ENCODE measurements at regions of chr11 and their contacts with region 1.

Region 1: DNA sequence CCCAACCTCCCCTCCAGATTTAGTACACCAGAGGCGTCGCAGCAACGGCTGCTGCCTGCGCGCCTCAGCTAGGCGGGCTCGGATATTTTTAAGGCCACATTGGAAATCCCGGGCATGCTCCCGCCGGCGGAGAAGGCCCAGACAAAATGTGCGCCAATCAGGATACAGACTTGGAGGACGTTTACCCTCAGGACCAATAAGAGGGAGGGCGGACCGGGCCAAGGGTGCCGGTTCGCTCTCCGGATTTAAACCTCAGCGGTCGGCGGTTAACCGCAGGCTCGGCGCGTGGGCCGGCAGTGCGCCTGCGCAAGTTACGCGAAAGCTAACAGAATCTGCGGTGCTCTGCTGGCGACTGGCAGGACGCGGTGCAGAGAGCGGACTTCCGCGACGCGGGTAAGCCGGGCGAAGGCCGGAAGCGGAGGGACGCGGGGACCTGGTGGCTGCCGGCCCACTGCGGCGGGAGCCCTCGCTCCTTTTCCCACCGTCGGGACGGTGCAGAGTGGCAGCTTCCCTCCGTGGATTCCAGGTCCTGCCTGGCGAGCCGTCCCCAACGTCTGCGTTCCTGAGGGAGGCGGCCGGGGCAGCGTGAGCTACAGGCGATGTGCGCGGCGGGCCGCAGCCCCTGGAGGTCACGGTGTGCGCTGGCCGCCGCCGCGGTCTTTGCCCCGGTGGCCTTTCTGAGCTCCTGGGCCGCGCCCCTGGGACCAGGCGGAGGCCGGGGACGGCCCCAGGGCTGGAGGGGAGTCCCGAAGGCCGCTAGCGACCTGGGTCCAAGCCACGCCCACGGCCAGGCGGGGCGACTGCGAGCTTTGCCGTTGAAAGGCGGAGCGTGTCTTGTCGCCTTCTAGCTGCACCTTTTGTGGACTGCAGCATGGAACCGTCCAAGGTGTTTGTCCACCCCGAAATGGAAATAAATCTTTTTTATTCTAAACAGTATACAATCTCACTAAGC is at the start of gene HYLS1:
- DNase-seq: peak; percentile 97
- ATAC-seq: peak; percentile 84
- H3K4me3 Mint-ChIP-seq: peak within 1 kb of the TSS; percentile 90
- H3K27ac Mint-ChIP-seq: peak within 1 kb of the TSS; percentile 98
- H3K4me1 Mint-ChIP-seq: peaks cover 18% of the 10 kb centered on the region
- H3K27me3 Mint-ChIP-seq: peaks cover 3% of the 10 kb centered on the region
- CTCF ChIP-seq: no peak
- total RNA-seq, gene HYLS1: 9.0 TPM in 2 replicates

Region 2: GRCh38 chr11:124758317-124759203 is 1129.1 kb before region 1 on chr11:
- CTCF ChIA-PET with region 1: no interaction called
- POLR2A ChIA-PET with region 1: no interaction called
- intact Hi-C with region 1: loop called (anchors 5 kb)
- DNase-seq: peak; percentile 72
- ATAC-seq: peak; percentile 67
- H3K4me3 Mint-ChIP-seq: peak overlapping the region; percentile 79
- H3K27ac Mint-ChIP-seq: peak overlapping the region; percentile 60
- H3K4me1 Mint-ChIP-seq: peaks cover 46% of the 10 kb centered on the region
- H3K27me3 Mint-ChIP-seq: peaks cover 2% of the 10 kb centered on the region
- CTCF ChIP-seq: no peak

Region 3: DNA sequence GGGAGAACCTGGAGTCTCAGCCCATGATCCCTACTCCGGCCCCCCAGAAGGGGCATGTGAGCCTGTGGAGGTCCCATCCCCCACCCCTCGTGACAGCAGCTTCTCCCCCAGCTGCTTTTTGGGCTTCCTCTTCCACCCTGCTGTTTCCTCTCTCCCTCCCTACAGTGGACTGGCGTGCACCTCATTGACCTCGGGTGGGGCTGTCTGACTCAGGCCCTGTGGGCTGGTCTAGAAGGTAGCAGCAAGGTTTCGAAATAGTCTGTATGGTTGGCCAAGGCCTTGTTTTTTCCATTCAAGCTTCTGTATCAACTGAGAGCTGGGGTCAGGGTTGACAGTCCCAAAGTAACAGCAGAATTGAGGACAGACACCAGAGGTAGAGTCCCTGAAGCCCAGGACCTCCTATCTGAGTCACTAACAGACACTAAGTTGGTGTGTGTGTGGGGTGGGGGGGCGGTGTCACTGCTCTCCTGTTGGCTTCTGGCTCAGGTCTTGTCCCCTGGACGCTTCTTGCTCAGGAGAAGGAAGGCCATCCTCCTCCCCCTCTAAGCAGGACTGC is 816.9 kb before region 1 on chr11:
- CTCF ChIA-PET with region 1: interaction called, 3 read pairs
- POLR2A ChIA-PET with region 1: no interaction called
- intact Hi-C with region 1: loop called (anchors 5 kb)
- DNase-seq: no peak
- ATAC-seq: peak; percentile 69
- H3K4me3 Mint-ChIP-seq: peak overlapping the region; percentile 40
- H3K27ac Mint-ChIP-seq: peak overlapping the region; percentile 82
- H3K4me1 Mint-ChIP-seq: peaks cover 71% of the 10 kb centered on the region
- H3K27me3 Mint-ChIP-seq: peaks cover 2% of the 10 kb centered on the region
- CTCF ChIP-seq: no peak

Region 4: GRCh38 chr11:125568970-125569914 is 318.4 kb before region 1 on chr11 and contains the start of gene EI24:
- CTCF ChIA-PET with region 1: interaction called, 3 read pairs
- POLR2A ChIA-PET with region 1: interaction called, 9 read pairs
- intact Hi-C with region 1: loop called (anchors 1 kb)
- DNase-seq: peak; percentile 83
- ATAC-seq: peak; percentile 97
- H3K4me3 Mint-ChIP-seq: peak within 1 kb of the TSS; percentile 93
- H3K27ac Mint-ChIP-seq: peak within 1 kb of the TSS; percentile 88
- H3K4me1 Mint-ChIP-seq: peaks cover 22% of the 10 kb centered on the region
- H3K27me3 Mint-ChIP-seq: no peaks in the 10 kb centered on the region
- CTCF ChIP-seq: no peak
- total RNA-seq, gene EI24: 34.3 and 34.5 TPM in 2 replicates

Region 5: DNA sequence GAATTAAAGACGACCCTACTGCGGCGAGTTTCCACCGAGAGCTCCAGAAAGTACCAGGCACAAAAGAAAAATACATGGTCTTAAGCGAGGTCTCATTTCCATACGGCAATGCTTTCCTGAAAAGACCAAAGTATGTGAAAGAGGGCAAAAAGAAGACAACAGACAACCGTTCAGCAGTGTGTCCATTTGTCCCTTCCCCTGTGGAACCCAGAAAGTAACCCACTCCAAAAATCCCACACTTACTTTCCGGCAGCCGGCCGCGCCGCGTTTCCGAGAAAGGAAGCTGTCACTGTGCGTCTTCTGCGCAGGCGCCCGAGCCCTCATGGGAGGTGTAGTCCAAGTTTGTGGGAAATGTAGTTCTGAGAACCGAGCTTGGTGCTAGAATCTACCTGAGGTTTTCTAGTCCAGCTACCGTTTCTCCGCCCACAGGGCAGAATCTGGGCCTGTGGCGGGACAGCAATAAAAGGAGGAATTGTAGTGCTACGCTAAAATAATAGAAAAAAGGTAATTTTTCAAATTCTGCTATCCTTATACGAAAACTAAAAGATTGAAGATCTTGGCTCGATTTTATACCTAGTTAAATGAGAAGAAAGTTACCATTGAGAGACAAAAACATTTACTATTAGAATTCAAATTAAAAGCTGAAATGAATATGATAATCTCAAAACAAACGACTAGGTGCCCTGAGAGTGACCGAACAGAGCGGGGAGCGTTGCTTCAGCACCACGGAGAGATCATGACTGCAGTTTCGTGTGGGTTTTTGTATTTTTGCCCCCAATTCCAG is 15.5 kb after region 1 on chr11 and contains the start of gene PUS3:
- CTCF ChIA-PET with region 1: interaction called, 13 read pairs
- POLR2A ChIA-PET with region 1: interaction called, 64 read pairs
- intact Hi-C with region 1: loop called (anchors 1 kb)
- DNase-seq: peak; percentile 77
- ATAC-seq: peak; percentile 96
- H3K4me3 Mint-ChIP-seq: peak within 1 kb of the TSS; percentile 94
- H3K27ac Mint-ChIP-seq: peak within 1 kb of the TSS; percentile 88
- H3K4me1 Mint-ChIP-seq: peaks cover 31% of the 10 kb centered on the region
- H3K27me3 Mint-ChIP-seq: peaks cover 22% of the 10 kb centered on the region
- CTCF ChIP-seq: no peak
- total RNA-seq, gene PUS3: 10.2 and 13.2 TPM in 2 replicates

Region 6: DNA sequence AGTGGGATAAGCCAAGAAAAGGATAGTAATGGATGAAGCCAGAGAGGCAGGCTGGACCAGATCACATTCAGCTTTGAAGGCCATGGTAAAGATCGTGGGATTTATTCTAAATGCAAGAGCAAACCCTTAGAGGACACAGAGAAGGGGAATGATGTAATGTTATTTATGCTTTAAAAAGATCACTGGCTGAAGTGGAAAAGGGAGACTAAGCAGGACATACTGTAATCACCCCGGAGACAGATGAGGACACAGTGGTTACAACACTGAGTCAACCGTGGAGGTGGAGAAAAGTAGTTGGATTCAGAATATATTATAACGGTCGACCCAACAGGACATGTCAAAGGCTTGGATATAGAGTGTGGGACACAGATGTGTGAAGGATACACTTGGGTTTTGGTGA is 136.5 kb after region 1 on chr11:
- CTCF ChIA-PET with region 1: no interaction called
- POLR2A ChIA-PET with region 1: no interaction called
- intact Hi-C with region 1: no loop called
- DNase-seq: no peak
- ATAC-seq: no peak
- H3K4me3 Mint-ChIP-seq: no peak overlapping the region
- H3K27ac Mint-ChIP-seq: no peak overlapping the region
- H3K4me1 Mint-ChIP-seq: no peaks in the 10 kb centered on the region
- H3K27me3 Mint-ChIP-seq: peaks cover 13% of the 10 kb centered on the region
- CTCF ChIP-seq: no peak

Region 7: GRCh38 chr11:126416542-126417090 is 529.0 kb after region 1 on chr11:
- CTCF ChIA-PET with region 1: no interaction called
- POLR2A ChIA-PET with region 1: no interaction called
- intact Hi-C with region 1: loop called (anchors 5 kb)
- DNase-seq: peak; percentile 55
- ATAC-seq: peak; percentile 99
- H3K4me3 Mint-ChIP-seq: peak overlapping the region; percentile 67
- H3K27ac Mint-ChIP-seq: no peak overlapping the region
- H3K4me1 Mint-ChIP-seq: peaks cover 26% of the 10 kb centered on the region
- H3K27me3 Mint-ChIP-seq: no peaks in the 10 kb centered on the region
- CTCF ChIP-seq: no peak

Region 8: GRCh38 chr11:126655807-126656128 is 768.1 kb after region 1 on chr11:
- CTCF ChIA-PET with region 1: no interaction called
- POLR2A ChIA-PET with region 1: no interaction called
- intact Hi-C with region 1: no loop called
- DNase-seq: no peak
- ATAC-seq: no peak
- H3K4me3 Mint-ChIP-seq: no peak overlapping the region
- H3K27ac Mint-ChIP-seq: no peak overlapping the region
- H3K4me1 Mint-ChIP-seq: no peaks in the 10 kb centered on the region
- H3K27me3 Mint-ChIP-seq: peaks cover 9% of the 10 kb centered on the region
- CTCF ChIP-seq: no peak

Measured in activated B cell treated with CpG ODN at 0.5 μM for 24 hours (primary cell).